Naive thymus-derived CD4-positive, alpha-beta T cell (primary cell): ENCODE measurements at regions of chr13 and their contacts with region 1.

Region 1: GRCh38 chr13:99192480-99192879 is 8.2 kb upstream of the UBAC2 start:
- DNase-seq: no peak
- ATAC-seq: no peak
- H3K4me3 ChIP-seq: no peak overlapping the region
- H3K4me3 Mint-ChIP-seq: no peak overlapping the region
- H3K27ac ChIP-seq: no peak overlapping the region
- H3K27ac Mint-ChIP-seq: peak overlapping the region in 1 of 9 donors; percentile 45
- H3K4me1 ChIP-seq: peaks cover 4 to 13% of the 10 kb centered on the region in 2 donors
- H3K4me1 Mint-ChIP-seq: peaks cover 0 to 30% (median 24%) of the 10 kb centered on the region in 7 donors
- H3K27me3 ChIP-seq: no peaks in the 10 kb centered on the region
- H3K27me3 Mint-ChIP-seq: peaks cover 0 to 3% (median 0%) of the 10 kb centered on the region in 5 donors

Region 2: DNA sequence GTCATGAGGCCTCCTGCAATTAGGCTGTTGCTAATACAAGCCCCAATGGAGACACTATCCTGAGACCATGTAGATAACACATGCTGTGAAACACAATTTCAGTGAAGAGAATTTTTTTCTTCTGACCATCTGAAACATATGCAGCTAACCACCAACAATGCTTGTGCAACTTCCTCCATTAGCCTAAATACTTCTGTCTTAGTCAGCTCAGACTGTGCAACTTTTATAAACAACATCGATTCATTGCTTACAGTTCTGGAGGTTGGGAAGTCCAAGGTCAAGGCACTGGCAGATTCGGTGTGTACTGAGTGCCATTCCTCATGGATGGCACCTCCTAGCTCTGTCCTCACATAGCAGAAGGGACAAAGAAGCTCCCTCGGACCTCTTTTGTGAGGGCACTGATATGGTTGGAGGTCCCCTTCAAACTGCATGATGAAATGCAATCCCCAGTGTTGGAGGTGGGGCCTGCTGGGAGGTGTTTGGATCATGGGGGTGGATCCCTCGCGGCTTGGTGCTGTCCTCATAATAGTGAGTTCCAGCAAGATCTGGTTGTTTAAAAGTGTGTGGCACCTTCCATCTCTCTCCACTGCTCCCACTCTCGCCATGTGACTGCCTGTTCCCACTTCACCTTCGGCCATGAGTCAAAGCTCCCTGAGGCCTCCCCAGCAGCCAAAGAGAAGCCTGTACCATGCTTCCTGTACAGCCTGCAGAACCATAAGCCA is 643.3 kb before region 1 on chr13:
- CTCF ChIA-PET with region 1: no interaction called
- POLR2A ChIA-PET with region 1: no interaction called
- intact Hi-C with region 1: no loop called
- DNase-seq: no peak
- ATAC-seq: peak; percentile 64
- H3K4me3 ChIP-seq: no peak overlapping the region
- H3K4me3 Mint-ChIP-seq: peak overlapping the region in 6 of 10 donors; percentile 22 to 40 (median 32)
- H3K27ac ChIP-seq: no peak overlapping the region
- H3K27ac Mint-ChIP-seq: peak overlapping the region in 7 of 9 donors; percentile 13 to 75 (median 53)
- H3K4me1 ChIP-seq: peaks cover 4 to 22% of the 10 kb centered on the region in 2 donors
- H3K4me1 Mint-ChIP-seq: peaks cover 64 to 93% (median 84%) of the 10 kb centered on the region in 7 donors
- H3K27me3 ChIP-seq: no peaks in the 10 kb centered on the region
- H3K27me3 Mint-ChIP-seq: no peaks in the 10 kb centered on the region

Region 3: GRCh38 chr13:99162538-99162937 is 29.9 kb before region 1 on chr13:
- CTCF ChIA-PET with region 1: no interaction called
- POLR2A ChIA-PET with region 1: no interaction called
- intact Hi-C with region 1: no loop called
- DNase-seq: no peak
- ATAC-seq: no peak
- H3K4me3 ChIP-seq: no peak overlapping the region
- H3K4me3 Mint-ChIP-seq: no peak overlapping the region
- H3K27ac ChIP-seq: no peak overlapping the region
- H3K27ac Mint-ChIP-seq: no peak overlapping the region
- H3K4me1 ChIP-seq: no peaks in the 10 kb centered on the region
- H3K4me1 Mint-ChIP-seq: peaks cover 0 to 3% (median 0%) of the 10 kb centered on the region in 7 donors
- H3K27me3 ChIP-seq: no peaks in the 10 kb centered on the region
- H3K27me3 Mint-ChIP-seq: peaks cover 0 to 38% (median 13%) of the 10 kb centered on the region in 5 donors

Region 4: DNA sequence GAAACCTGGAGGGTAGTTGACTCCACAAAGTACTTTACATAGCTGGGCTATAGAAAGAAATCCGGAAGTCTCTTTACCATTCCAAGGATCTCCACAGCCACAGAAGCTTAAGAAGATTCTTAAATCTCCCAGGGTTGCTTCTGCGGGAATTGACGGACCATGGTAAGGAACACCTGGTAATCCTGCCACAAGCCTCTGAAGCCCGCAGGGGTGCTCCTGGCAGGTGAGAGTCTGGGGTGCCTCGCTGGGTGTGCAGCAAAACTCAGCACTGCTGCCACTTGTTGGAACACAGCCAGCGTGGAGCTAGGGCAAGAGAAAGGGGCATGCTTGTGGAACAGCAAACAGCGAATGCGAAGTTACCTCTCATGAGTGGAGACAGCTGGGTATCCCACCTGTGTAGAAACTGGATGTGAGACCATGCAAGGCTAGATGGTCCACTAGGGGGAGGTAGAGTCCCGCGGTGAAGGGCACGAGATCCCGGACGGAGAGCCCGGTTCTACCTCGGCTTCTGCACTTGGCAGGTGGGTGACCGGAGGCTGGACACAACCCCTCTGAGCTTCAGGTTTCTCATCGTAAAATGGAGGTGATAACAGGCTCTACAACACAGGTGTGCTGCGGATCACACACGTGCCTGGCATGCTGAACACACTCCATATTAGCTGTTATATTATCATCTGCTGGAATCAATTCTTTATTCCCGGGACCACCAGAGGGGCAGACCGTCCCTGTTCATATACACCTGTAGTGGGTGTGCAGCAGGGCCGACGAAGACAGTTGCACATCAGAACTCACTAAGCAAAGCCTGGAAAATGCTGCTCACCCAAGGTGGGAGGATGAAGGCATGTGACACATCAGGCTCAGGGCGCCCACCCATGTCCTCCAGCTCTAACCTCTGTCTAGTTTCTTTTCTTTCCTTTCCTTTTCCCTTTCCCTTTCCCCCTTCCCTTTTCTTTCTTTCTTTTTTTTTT is 15.9 kb before region 1 on chr13:
- CTCF ChIA-PET with region 1: interaction called, 12 read pairs
- POLR2A ChIA-PET with region 1: interaction called, 3 read pairs
- intact Hi-C with region 1: loop called in 1 of 2 experiments (anchors 1 kb)
- DNase-seq: peak; percentile 54 to 79 (median 71)
- ATAC-seq: peak; percentile 95
- H3K4me3 ChIP-seq: peak overlapping the region; percentile 1
- H3K4me3 Mint-ChIP-seq: peak overlapping the region; percentile 39 to 81 (median 72)
- H3K27ac ChIP-seq: no peak overlapping the region
- H3K27ac Mint-ChIP-seq: peak overlapping the region in 8 of 9 donors; percentile 34 to 77 (median 54)
- H3K4me1 ChIP-seq: peaks cover 22 to 24% of the 10 kb centered on the region in 2 donors
- H3K4me1 Mint-ChIP-seq: peaks cover 26 to 44% (median 39%) of the 10 kb centered on the region in 7 donors
- H3K27me3 ChIP-seq: no peaks in the 10 kb centered on the region
- H3K27me3 Mint-ChIP-seq: peaks cover 0 to 13% (median 0%) of the 10 kb centered on the region in 5 donors